ENCODE measurements at regions of chr12 and their contacts with region 1.

Region 1: DNA sequence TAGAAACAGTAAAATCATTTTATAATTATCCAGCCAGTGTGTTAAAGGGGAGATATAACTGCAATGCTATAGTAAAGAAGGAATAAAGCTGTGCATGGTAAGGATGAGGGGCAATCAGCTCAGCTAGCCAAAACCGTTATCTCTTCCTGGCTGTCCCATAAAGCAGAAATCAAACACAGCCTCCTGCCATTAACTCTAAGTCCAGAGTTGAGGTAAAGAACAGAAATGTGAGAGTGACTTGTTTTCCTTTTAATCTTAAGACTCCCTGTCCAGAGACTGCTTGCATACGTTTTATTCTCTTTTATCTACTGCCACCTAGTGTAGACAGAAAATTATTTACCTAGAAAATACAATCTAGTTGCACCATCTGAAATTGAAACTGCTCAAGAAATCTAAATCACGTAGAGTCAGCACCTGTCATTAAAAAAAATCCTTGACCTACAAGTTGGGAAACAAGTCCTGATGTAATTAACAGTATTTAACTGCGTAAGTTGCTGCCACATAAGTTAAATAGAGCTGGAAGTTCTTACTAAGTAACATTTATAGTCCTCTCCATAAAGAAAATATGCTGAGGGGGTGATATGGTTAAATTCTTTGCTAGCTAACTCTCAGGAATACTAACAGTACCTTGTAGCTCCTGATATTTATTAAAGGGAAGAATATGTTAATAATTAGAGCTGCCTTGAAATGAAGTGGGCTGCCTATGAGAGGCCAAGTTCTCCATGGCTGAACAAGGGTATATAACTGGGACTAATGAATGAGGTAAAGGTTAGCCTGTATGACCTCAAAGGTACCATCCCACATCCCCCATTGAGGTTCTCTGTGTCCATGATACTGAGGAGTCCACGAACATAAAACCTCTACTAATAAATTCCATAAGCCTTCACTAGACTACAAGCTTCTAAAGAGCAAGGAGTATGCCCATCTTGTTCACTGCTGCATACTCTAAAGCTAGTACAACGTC is 62.7 kb downstream of the GALNT4 start:
- DNase-seq: no peak

Region 2: DNA sequence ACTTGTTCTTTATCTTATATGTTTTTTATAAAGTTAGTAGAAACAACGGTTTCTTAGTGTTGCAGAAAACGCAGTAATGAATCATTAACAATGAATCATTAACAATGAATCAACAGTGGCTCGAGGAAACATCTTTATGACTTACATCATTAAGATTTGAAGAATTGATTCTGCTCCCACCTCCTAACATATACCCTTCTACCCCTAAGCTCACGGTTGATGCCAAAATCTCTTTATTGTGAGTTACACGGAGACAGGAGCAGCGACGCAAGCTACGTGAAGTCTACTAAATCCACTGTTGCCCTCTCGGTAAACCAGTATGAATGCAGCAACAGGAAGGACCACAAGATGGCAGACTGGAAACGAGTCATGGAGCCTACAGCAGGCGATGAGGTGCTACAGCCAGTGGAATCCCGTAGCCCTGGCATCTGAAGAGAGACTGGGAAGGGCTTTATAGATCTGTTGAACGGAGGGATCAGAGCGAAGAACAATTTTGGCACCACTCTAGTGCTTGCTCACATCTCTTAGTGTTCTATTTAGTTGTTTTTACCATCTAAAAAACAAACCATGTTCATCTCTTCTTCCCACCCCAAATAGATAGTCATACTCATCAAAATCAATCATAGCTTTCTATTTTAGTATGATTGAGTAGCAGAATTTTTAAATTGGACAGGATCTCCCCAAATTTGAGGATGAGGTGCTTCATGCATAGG is 442.4 kb before region 1 on chr12:
- intact Hi-C with region 1: loop called in 1 of 2 experiments (anchors 5 kb)
- DNase-seq: no peak

Region 3: GRCh38 chr12:89040146-89040964 is 421.6 kb before region 1 on chr12:
- intact Hi-C with region 1: loop called (anchors 5 to 10 kb)
- DNase-seq: peak; percentile 82

Region 4: GRCh38 chr12:89051065-89051677 is 410.8 kb before region 1 on chr12:
- intact Hi-C with region 1: loop called (anchors 5 to 10 kb)
- DNase-seq: no peak

Region 5: GRCh38 chr12:89236748-89237388 is 225.1 kb before region 1 on chr12:
- intact Hi-C with region 1: no loop called
- DNase-seq: no peak

Region 6: DNA sequence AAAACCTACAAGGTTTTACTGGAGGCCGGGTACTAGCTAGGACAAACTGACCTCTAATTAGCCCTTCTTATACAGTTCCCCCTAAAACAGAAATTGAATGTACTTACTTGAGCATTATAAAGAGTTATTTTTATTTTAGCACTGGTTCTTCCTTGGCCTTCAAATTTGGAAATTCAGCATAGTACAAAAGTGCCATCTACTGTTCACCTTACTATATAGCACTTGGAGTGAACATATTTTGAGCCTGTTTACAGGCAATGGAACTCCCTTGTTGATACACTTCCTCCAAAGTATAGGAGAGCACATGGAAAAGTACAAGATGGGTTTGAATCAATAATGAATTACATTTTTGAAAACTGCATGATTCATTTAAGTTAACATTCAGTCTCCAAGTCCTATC is 67.8 kb after region 1 on chr12:
- intact Hi-C with region 1: no loop called
- DNase-seq: no peak

Region 7: GRCh38 chr12:90076851-90077319 is 615.0 kb after region 1 on chr12:
- intact Hi-C with region 1: no loop called
- DNase-seq: no peak